ENCODE measurements at regions of chr1 and their contacts with region 1.

Region 1: GRCh38 chr1:27603681-27604578 is at the start of gene AHDC1:
- DNase-seq: peak; percentile 65
- ATAC-seq: peak; percentile 74
- H3K4me3 ChIP-seq: peak within 1 kb of the TSS; percentile 85 to 95
- H3K27ac ChIP-seq: peak within 1 kb of the TSS; percentile 68
- H3K4me1 ChIP-seq: peaks cover 40 to 70% of the 10 kb centered on the region in 2 experiments
- H3K27me3 ChIP-seq: no peaks in the 10 kb centered on the region
- CTCF ChIP-seq: no peak
- POLR2A ChIP-seq: peak; percentile 34
- RAD21 ChIP-seq: no peak
- total RNA-seq, gene AHDC1: 33.7 TPM

Region 2: DNA sequence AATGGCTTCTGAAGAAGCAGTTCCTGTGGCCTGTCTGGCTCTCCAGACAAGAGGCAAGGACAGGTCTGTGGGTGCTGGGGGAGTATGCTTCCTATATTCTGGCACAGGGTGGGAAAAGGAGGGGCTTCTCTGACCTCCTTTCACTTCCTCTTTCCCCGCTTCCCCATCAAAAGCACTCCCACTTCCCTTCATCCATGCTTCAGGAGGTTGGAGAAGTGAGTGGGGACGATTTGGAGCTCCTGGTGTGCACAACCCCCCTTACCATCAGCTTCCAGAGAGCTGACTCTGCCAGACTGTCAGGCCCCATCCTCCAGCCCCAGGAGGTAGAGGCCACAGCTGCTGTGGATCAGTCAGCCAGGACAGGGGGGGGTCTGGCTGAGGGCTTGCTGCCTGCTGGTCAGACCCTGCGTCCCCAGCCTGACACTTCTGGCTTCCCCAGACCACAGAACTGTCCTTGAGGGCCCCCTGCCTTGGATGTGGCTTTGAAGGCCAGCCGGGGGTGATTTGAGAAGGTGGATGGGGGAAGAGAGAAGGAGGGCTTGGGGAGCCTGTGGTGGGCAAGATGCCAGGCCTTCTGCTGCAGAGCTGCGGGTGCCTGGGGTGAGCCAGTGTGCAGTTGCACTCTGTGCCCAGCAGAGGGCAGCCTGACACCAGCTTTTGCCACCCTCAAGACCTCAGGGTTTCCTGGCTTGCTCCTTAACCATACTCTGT is 303.4 kb before region 1 on chr1:
- CTCF ChIA-PET with region 1: interaction called, 24 read pairs
- POLR2A ChIA-PET with region 1: no interaction called
- RAD21 ChIA-PET with region 1: interaction called, 6 to 7 read pairs
- intact Hi-C with region 1: loop called (anchors 2 kb)
- DNase-seq: peak; percentile 69
- ATAC-seq: peak; percentile 94
- H3K4me3 ChIP-seq: no peak overlapping the region
- H3K27ac ChIP-seq: no peak overlapping the region
- H3K4me1 ChIP-seq: peaks cover 0 to 7% of the 10 kb centered on the region in 2 experiments; a peak in 2 of 4 replicates
- H3K27me3 ChIP-seq: no peaks in the 10 kb centered on the region
- CTCF ChIP-seq: peak; percentile 91 to 93 (median 93)
- POLR2A ChIP-seq: no peak
- RAD21 ChIP-seq: peak; percentile 99

Region 3: DNA sequence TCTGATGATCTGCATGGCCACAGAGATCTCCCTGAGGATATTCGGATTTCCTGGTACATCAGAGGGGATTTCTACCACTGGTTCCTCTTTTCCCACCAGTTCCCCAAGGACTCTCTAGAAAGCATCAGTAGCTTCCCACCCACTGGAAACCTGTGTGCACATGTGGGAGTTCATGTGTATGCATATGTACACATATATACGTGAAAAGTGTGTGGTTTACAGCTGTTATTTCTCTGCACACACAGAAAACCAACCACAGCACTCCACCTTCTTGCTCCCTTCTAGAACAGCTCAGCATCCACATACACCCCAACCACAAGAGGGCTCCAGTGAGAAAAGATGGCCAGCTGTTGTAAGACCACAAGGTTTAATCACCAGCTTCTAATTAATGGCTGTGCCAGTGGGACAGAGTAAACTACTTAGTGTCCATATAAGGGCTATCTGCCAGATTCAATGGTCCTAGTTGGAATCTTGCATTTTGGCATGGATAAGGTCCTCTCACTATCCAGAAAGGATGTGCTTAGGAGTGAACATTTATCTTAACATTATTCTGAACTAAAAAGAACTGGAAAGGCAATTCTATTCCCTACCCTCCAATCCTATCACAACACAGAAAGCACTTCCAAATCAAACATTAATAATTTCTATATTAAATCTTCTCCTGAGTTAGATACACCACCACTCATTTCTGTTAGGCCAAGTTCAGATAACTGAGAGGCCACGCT is 187.4 kb before region 1 on chr1:
- CTCF ChIA-PET with region 1: interaction called, 8 read pairs
- POLR2A ChIA-PET with region 1: no interaction called
- RAD21 ChIA-PET with region 1: interaction called, 3 to 4 read pairs
- intact Hi-C with region 1: loop called (anchors 1 kb)
- DNase-seq: peak; percentile 55
- ATAC-seq: peak; percentile 90
- H3K4me3 ChIP-seq: no peak overlapping the region
- H3K27ac ChIP-seq: no peak overlapping the region
- H3K4me1 ChIP-seq: no peaks in the 10 kb centered on the region
- H3K27me3 ChIP-seq: no peaks in the 10 kb centered on the region
- CTCF ChIP-seq: peak; percentile 52 to 84 (median 79); a peak in 5 of 6 replicates
- POLR2A ChIP-seq: no peak
- RAD21 ChIP-seq: peak; percentile 74

Region 4: DNA sequence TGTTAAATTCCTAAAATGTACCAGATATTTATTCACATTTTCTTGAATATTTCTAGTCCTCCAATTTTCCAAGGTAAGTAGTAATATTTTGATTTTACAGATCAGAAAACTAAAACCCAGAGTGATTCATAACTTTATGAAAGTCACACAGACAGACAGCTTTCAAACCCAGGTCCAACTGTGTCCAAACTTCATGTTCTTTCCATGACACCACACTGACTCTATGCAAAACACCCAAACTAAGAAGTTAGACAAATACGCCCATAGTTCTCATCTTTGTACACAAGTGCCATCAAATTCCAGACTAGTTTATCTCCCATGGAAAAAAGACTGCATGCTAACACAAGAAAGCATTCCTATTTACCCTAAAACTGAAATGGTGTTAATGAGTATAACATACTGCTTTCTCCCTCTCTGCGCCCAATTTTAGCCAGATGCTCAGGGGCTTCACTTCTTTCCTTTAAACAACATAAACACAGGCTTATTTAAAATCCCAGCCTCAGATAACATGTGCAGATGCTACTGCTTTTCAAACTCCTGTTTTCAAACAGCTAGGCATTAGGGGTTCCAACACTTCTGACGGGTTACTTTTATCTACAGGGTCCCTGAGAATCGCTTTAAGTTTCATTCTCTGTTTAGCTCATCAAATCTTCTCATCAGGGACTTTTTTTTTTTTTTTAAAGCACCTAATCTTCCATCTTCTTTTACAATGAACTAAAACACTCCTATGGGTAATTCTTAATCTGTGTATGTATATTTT is 158.6 kb before region 1 on chr1:
- CTCF ChIA-PET with region 1: no interaction called
- POLR2A ChIA-PET with region 1: no interaction called
- RAD21 ChIA-PET with region 1: no interaction called
- intact Hi-C with region 1: no loop called
- DNase-seq: no peak
- ATAC-seq: no peak
- H3K4me3 ChIP-seq: no peak overlapping the region
- H3K27ac ChIP-seq: no peak overlapping the region
- H3K4me1 ChIP-seq: peaks cover 0 to 6% of the 10 kb centered on the region in 2 experiments; a peak in 1 of 4 replicates
- H3K27me3 ChIP-seq: no peaks in the 10 kb centered on the region
- CTCF ChIP-seq: no peak
- POLR2A ChIP-seq: no peak
- RAD21 ChIP-seq: no peak

Region 5: GRCh38 chr1:27489910-27490741 is 113.8 kb before region 1 on chr1 and contains the start of gene WASF2:
- CTCF ChIA-PET with region 1: no interaction called
- POLR2A ChIA-PET with region 1: interaction called, 13 read pairs
- RAD21 ChIA-PET with region 1: no interaction called
- intact Hi-C with region 1: no loop called
- DNase-seq: peak; percentile 95
- ATAC-seq: peak; percentile 93
- H3K4me3 ChIP-seq: peak within 1 kb of the TSS; percentile 69 to 99
- H3K27ac ChIP-seq: peak within 1 kb of the TSS; percentile 91
- H3K4me1 ChIP-seq: peaks cover 11 to 39% of the 10 kb centered on the region in 2 experiments
- H3K27me3 ChIP-seq: no peaks in the 10 kb centered on the region
- CTCF ChIP-seq: no peak
- POLR2A ChIP-seq: peak; percentile 95
- RAD21 ChIP-seq: no peak
- total RNA-seq, gene WASF2: 111 TPM

Region 6: DNA sequence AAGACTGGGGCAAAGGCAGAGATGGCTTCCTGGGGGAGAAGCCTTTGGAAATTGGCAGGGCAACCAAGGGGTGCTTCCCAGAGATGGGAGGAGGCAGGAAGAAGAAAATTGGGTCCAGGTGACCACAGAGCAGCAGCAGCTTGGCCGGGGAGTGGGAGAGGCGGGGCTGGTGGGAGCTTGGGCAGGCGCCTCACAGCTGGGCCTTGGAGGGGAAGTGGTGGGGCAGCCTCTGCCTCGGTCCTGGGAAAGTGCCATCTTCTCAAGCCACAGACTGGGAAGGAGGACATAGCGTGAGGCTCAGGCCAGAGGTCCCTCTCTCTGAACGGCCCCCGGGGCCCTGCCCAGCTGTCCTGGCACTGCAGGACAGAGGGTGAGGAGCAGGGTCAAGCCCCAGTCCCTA is 90.0 kb before region 1 on chr1:
- CTCF ChIA-PET with region 1: no interaction called
- POLR2A ChIA-PET with region 1: no interaction called
- RAD21 ChIA-PET with region 1: no interaction called
- intact Hi-C with region 1: no loop called
- DNase-seq: no peak
- ATAC-seq: no peak
- H3K4me3 ChIP-seq: no peak overlapping the region
- H3K27ac ChIP-seq: no peak overlapping the region
- H3K4me1 ChIP-seq: peaks cover 15 to 33% of the 10 kb centered on the region in 2 experiments
- H3K27me3 ChIP-seq: no peaks in the 10 kb centered on the region
- CTCF ChIP-seq: no peak
- POLR2A ChIP-seq: no peak
- RAD21 ChIP-seq: no peak

Measured in HCT116 (cell line).